ENCODE measurements at regions of chr10 and their contacts with region 1.

Region 1: DNA sequence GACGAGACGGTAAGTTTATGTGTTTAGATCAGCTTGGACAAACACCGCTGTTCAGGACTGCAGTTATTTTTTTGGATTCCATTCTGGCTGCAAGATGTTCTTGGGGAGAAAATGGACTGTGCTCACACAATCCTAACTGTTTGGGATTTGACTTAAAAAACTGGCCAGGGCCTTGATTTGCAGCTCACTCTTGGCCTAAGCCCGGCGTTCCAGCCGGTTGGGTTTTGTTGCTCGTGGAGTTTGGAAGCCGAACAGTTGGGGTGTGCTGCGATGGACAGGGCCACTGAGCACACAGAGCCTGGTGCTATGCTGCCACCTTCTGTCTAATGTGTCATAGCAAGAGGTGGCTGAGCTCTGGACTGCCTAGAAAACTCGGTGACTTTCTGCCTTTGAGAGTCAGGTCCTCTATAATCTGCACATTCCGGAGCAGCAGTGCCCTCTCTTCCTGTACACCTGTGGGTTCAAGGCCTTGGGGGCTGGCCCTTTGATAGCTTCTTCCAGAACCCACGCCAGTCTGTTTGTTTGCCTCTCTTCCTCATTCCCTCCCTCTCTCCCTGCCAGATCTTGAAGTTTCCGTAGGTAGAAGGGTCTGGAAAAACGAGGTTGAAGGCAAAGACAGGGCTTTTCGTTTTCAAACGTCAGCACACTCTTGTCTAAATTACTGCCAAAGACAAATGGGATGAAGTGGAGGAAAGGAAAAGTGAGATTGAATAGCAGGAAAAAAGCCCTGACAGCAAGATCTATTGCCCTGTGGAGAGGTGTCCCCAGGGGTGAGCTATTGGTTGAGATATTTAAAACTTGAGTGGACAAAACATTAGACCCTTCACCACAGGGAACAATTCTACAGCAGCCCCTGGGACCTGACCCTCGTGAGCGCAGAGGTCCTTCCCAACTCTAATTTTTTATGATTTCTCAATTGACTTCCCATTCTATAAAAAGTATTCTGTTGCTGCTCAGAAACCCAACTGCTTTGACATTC is 167.5 kb upstream of the HABP2 start:
- H3K4me3 ChIP-seq: no peak overlapping the region
- H3K27ac ChIP-seq: no peak overlapping the region; the same call in 1 of the 2 replicates
- H3K4me1 ChIP-seq: no peaks in the 10 kb centered on the region; the same call in 1 of the 2 replicates
- CTCF ChIP-seq: peak; percentile 90

Region 2: DNA sequence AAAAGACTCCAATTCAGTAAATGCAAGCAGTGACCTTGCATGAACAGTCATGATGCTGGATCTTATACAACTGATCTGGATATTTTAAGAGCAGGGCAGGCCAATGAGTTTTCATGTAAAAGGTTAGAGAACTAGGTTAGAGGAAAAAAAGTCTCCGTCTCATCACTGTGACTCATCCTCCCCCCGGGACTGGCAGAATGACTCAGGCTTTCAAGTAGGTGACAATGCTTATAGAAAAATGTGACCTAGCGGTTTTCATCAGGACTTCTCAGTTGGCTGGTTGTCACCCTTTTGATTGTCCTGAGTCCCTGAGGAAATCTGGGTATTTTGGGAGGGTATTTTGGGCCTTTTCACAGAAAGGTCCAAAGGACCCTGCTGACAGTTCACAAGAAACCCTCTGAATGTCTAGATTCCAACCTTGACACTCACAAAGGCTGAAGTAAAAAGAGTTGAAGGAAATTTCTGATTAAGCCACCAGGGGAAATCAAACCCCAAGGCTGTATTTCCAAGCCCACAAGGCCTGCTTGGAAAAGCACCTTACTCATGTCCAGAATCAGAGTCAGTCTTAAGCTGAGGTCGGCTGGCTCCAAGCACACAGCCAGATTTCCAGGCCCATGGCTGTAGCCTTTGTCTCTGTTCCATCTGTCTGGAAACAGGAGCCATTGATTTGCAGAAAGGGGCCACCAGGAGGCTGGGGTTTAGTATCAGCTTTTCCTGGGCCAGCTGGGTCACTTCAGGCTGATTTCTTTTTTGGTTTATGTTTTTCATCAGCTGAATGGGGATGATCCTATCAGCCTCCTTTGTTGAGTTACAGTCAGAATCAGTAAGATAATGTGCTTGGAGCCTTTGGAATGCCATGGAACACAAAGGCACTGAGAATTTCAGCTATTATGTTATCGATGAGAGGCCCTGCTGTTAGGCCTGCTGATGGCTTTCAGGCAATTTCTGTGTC is 58.9 kb before region 1 on chr10:
- CTCF ChIA-PET with region 1: no interaction called
- POLR2A ChIA-PET with region 1: no interaction called
- H3K4me3 ChIP-seq: no peak overlapping the region
- H3K27ac ChIP-seq: no peak overlapping the region
- H3K4me1 ChIP-seq: peaks cover 5% of the 10 kb centered on the region; the same call in 1 of the 2 replicates
- CTCF ChIP-seq: no peak

Region 3: DNA sequence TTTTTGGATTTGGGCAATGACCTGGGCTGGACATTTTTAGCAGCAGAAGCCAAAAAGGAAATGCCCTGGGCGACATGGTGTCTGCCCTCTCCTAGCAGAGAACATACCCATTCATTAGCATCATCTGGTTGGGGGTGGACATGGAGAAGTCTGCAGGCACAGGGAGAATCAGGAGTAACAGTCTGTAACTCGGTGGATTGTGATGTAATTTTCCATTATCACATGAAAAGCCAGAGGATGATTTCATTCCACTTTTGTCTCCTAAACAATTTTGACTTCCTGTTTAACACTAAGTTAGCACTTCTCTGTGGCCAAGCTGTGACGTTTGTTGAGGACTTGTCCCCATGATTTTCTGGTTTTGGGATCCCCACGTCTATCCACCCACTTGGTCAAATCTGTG is 13.8 kb after region 1 on chr10:
- CTCF ChIA-PET with region 1: interaction called, 14 read pairs
- POLR2A ChIA-PET with region 1: interaction called, 4 read pairs
- H3K4me3 ChIP-seq: no peak overlapping the region
- H3K27ac ChIP-seq: no peak overlapping the region
- H3K4me1 ChIP-seq: no peaks in the 10 kb centered on the region
- CTCF ChIP-seq: no peak

Measured in HEK293 (cell line).